ENCODE measurements at regions of chr3 and their contacts with region 1.

Region 1: DNA sequence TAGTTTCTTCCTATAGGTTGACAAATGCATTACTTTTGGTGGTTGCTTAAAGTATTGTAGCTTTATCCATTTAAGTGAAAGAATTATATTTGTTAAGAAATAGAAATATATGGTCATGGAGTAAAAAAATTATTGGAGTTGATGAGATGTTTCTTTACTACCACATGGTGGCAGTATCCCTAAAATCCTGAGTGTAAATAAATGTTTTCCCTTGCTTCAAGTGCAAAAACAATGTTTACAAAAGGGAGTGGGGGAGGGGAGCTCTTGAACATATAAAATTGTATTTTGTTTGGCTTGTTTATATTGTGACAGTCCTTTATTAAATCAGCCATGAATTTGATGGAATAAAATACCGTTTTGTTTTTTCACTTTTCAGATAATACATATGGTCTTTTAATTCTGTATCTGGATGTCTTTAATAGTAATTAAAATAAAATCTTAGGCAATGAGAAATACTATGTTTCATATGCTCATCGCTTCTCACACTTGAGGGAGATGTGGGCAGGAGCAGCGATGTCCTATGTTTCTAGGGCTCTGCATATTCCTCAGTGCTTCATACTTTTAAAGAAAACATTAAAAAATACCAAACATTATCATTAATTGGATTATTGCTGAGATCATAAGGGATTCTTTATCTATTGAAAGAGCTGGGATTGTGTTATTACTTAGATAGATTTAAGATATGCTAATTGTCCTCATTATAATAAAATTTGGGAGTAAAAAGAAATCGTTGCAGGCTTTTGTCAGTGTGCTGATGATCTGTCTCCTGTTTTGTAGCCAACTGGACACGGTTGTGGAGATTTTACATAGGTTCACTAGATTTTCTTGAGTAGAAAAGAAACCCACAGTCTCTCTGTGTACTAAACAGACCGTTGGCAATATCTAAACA is 349.7 kb downstream of the TUSC7 start:
- DNase-seq: no peak
- H3K4me3 Mint-ChIP-seq: no peak overlapping the region
- H3K27ac Mint-ChIP-seq: no peak overlapping the region
- H3K4me1 Mint-ChIP-seq: no peaks in the 10 kb centered on the region
- H3K27me3 Mint-ChIP-seq: no peaks in the 10 kb centered on the region
- CTCF ChIP-seq: no peak

Region 2: DNA sequence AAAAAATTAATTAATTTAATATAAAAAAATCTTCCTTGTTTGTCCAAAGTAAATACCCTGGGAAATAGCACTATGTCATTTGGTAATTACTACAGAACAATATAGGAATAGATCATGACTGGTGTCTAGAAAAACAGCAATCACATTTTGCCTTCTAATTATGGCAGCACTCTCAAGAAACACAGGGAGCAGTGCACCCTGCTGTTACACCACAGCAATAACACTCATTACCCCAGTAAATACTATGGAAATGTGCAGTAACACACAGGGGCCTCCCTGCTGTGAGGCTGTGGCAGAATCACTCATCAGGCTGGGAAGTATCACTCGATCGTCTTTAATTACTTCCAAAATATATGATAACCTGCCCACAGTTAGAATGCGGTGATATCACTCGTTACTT is 296.3 kb after region 1 on chr3:
- CTCF ChIA-PET with region 1: no interaction called
- intact Hi-C with region 1: loop called (anchors 1 kb)
- DNase-seq: peak; percentile 27
- H3K4me3 Mint-ChIP-seq: no peak overlapping the region
- H3K27ac Mint-ChIP-seq: no peak overlapping the region
- H3K4me1 Mint-ChIP-seq: no peaks in the 10 kb centered on the region
- H3K27me3 Mint-ChIP-seq: no peaks in the 10 kb centered on the region
- CTCF ChIP-seq: peak; percentile 32

Measured in Calu3 (cell line).